HepG2 (cell line): ENCODE measurements at regions of chr4 and their contacts with region 1.

Region 1: GRCh38 chr4:80619070-80619674 is 283.6 kb downstream of the CFAP299 start:
- DNase-seq: peak; percentile 3
- ATAC-seq: no peak
- H3K4me3 ChIP-seq: no peak overlapping the region
- H3K27ac ChIP-seq: no peak overlapping the region
- H3K4me1 ChIP-seq: no peaks in the 10 kb centered on the region
- H3K27me3 ChIP-seq: no peaks in the 10 kb centered on the region; a peak in 1 of 5 replicates
- CTCF ChIP-seq: no peak
- EP300 ChIP-seq: no peak
- POLR2A ChIP-seq: no peak
- RAD21 ChIP-seq: no peak

Region 2: DNA sequence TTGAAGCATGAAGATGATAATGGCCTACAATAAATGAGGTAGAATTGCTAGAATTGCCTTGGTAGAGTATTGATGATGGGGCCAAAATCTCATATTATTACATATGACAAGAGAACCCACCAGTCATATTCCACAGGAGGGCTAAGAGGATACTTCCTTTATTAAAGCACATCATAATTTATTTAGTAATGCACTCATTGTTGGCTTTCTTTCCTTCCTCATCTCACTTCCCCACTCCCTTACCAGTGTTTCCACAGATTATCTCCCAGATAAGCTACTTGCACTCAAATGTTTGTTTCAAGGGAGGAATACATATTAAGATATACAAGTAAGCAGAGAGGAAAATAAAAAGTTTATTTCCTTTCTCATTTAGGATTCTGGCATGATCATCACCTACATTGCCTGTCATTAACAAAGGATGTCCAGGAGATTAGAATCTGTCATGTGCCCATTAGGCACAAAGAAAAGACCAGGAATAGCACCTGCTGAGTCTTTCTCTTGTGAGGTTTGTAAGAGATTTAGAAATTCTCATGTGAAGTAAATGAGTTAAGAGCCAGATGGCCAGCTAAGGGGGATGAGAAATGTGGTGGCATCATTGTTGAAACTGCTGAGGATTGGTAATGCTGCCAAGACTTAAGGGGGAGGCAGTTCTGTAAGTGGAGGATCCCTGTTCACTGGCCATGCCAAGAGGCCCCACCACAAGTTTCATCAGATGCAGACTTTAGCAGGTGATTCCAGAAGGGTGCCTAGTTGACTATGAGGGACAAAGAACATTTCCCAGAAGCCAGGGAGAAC is 474.3 kb before region 1 on chr4:
- CTCF ChIA-PET with region 1: no interaction called
- POLR2A ChIA-PET with region 1: no interaction called
- in situ Hi-C with region 1: no loop called
- intact Hi-C with region 1: no loop called
- DNase-seq: no peak
- ATAC-seq: no peak
- H3K4me3 ChIP-seq: no peak overlapping the region
- H3K27ac ChIP-seq: no peak overlapping the region
- H3K4me1 ChIP-seq: no peaks in the 10 kb centered on the region
- H3K27me3 ChIP-seq: no peaks in the 10 kb centered on the region
- CTCF ChIP-seq: no peak
- EP300 ChIP-seq: no peak
- POLR2A ChIP-seq: no peak
- RAD21 ChIP-seq: no peak

Region 3: DNA sequence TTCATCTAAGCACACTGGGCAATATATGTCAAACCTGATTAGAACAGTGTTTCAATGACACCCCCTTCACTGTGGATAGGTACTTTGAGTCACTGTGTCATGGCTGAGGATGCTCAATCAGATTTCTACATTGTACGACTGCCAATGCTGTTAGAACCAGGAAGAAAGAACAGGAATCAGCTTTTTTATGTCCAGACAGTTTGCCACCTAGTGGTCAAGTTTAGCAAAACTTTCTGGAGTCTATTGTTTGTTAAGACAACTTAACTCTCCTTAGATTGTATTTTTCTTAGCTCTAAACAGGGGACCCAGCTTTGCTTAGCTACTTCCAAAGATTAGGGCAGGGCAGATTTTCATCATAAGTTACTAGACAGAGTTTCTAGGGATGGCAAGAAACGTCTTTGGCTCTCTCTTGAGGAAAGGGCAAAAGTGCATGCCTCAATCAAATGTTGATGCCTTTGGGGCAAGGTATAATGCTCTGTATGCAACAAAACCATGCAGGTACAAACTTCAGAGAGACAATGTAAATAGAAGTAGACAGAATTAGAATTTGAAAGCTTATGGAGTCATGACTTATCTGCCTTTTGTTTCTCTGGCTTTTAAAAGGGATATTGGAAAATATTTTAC is 370.9 kb after region 1 on chr4:
- CTCF ChIA-PET with region 1: no interaction called
- POLR2A ChIA-PET with region 1: no interaction called
- in situ Hi-C with region 1: no loop called
- intact Hi-C with region 1: loop called (anchors 5 kb)
- DNase-seq: peak; percentile 40
- ATAC-seq: peak; percentile 74
- H3K4me3 ChIP-seq: no peak overlapping the region
- H3K27ac ChIP-seq: no peak overlapping the region
- H3K4me1 ChIP-seq: no peaks in the 10 kb centered on the region
- H3K27me3 ChIP-seq: no peaks in the 10 kb centered on the region
- CTCF ChIP-seq: peak; percentile 67
- EP300 ChIP-seq: no peak
- POLR2A ChIP-seq: no peak
- RAD21 ChIP-seq: peak; percentile 34; the same call in 1 of the 2 replicates

Region 4: GRCh38 chr4:81040012-81040659 is 421.0 kb after region 1 on chr4:
- CTCF ChIA-PET with region 1: no interaction called
- POLR2A ChIA-PET with region 1: no interaction called
- in situ Hi-C with region 1: no loop called
- intact Hi-C with region 1: loop called (anchors 2 kb)
- DNase-seq: no peak
- ATAC-seq: 0 out of 3 replicates have a peak, but pooled peaks have one; percentile 22
- H3K4me3 ChIP-seq: no peak overlapping the region
- H3K27ac ChIP-seq: no peak overlapping the region
- H3K4me1 ChIP-seq: no peaks in the 10 kb centered on the region
- H3K27me3 ChIP-seq: no peaks in the 10 kb centered on the region
- CTCF ChIP-seq: peak; percentile 64
- EP300 ChIP-seq: no peak
- POLR2A ChIP-seq: no peak
- RAD21 ChIP-seq: no peak